ENCODE measurements at regions of chr12 and their contacts with region 1.

Region 1: GRCh38 chr12:117857632-117858612 is 110.9 kb downstream of the KSR2 start:
- DNase-seq: no peak
- ATAC-seq: peak; percentile 50; the same call in 1 of the 2 replicates
- H3K4me3 ChIP-seq: no peak overlapping the region
- H3K27ac ChIP-seq: no peak overlapping the region
- H3K4me1 ChIP-seq: no peaks in the 10 kb centered on the region
- H3K27me3 ChIP-seq: no peaks in the 10 kb centered on the region
- CTCF ChIP-seq: peak; percentile 83

Region 2: GRCh38 chr12:117212563-117213190 is 645.2 kb before region 1 on chr12:
- CTCF ChIA-PET with region 1: interaction called, 5 read pairs
- POLR2A ChIA-PET with region 1: no interaction called
- in situ Hi-C with region 1: no loop called
- intact Hi-C with region 1: loop called (anchors 5 kb)
- DNase-seq: peak; percentile 61
- ATAC-seq: peak; percentile 93
- H3K4me3 ChIP-seq: no peak overlapping the region
- H3K27ac ChIP-seq: no peak overlapping the region
- H3K4me1 ChIP-seq: no peaks in the 10 kb centered on the region
- H3K27me3 ChIP-seq: peaks cover 3% of the 10 kb centered on the region; the same call in 1 of the 2 replicates
- CTCF ChIP-seq: peak; percentile 92

Region 3: GRCh38 chr12:117692512-117692911 is 165.4 kb before region 1 on chr12:
- CTCF ChIA-PET with region 1: no interaction called
- POLR2A ChIA-PET with region 1: no interaction called
- in situ Hi-C with region 1: no loop called
- intact Hi-C with region 1: no loop called
- DNase-seq: no peak
- ATAC-seq: no peak
- H3K4me3 ChIP-seq: no peak overlapping the region
- H3K27ac ChIP-seq: no peak overlapping the region
- H3K4me1 ChIP-seq: 0 out of 2 replicates have a peak, but pooled peaks cover under 1% of the 10 kb centered on the region
- H3K27me3 ChIP-seq: no peaks in the 10 kb centered on the region
- CTCF ChIP-seq: no peak

Region 4: DNA sequence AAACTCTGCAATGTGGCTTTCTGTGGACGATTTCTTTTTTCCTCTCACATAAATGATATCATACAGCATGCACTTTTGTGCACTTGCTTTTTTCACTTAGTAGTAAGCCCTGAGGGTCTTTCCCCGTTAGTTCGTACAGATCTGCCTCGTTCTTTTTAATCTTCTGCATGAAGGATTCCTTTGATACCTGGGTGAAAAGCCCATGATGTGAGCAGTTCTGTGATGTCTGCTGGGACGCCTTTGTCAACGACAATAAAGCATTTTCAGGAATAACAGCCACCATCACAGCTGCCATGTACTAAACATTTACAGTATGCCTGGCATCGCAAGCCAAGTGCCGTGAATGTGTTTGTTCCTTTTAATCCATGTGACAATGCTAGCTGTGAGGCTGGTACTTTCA is 11.6 kb after region 1 on chr12:
- CTCF ChIA-PET with region 1: interaction called, 10 read pairs
- POLR2A ChIA-PET with region 1: no interaction called
- in situ Hi-C with region 1: no loop called
- intact Hi-C with region 1: no loop called
- DNase-seq: no peak
- ATAC-seq: no peak
- H3K4me3 ChIP-seq: no peak overlapping the region
- H3K27ac ChIP-seq: no peak overlapping the region
- H3K4me1 ChIP-seq: no peaks in the 10 kb centered on the region
- H3K27me3 ChIP-seq: no peaks in the 10 kb centered on the region
- CTCF ChIP-seq: no peak

Measured in Panc1 (cell line).